Naive thymus-derived CD4-positive, alpha-beta T cell (primary cell): ENCODE measurements at regions of chr20 and their contacts with region 1.

Region 1: DNA sequence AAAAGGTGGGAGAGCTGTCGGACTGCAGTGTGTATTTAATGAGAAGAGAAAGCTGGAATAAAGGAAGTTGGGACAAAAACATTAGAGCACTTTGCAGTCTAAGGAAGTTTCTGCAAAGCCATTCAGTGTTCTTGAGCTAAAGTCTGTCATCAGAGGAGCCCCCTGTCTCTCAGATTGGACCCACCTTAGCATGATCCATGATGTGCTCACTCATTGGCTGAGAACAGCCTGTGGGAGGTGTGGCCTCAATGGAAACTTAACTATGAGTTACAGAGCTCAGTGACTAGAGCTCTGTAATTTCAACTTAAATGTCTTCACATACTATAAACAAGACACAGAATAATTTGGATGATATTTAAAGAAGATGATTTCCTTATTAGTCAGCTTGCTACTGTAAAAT is 437.0 kb downstream of the BTBD3 start:
- DNase-seq: no peak
- ATAC-seq: no peak
- H3K4me3 ChIP-seq: no peak overlapping the region
- H3K4me3 Mint-ChIP-seq: peak overlapping the region in 1 of 10 donors; percentile 8
- H3K27ac ChIP-seq: no peak overlapping the region
- H3K27ac Mint-ChIP-seq: no peak overlapping the region
- H3K4me1 ChIP-seq: no peaks in the 10 kb centered on the region
- H3K4me1 Mint-ChIP-seq: no peaks in the 10 kb centered on the region
- H3K27me3 ChIP-seq: no peaks in the 10 kb centered on the region
- H3K27me3 Mint-ChIP-seq: no peaks in the 10 kb centered on the region

Region 2: GRCh38 chr20:12028771-12029170 is 326.0 kb before region 1 on chr20:
- CTCF ChIA-PET with region 1: no interaction called
- POLR2A ChIA-PET with region 1: no interaction called
- intact Hi-C with region 1: loop called in 1 of 2 experiments (anchors 5 kb)
- DNase-seq: no peak
- ATAC-seq: no peak
- H3K4me3 ChIP-seq: no peak overlapping the region
- H3K4me3 Mint-ChIP-seq: no peak overlapping the region
- H3K27ac ChIP-seq: no peak overlapping the region
- H3K27ac Mint-ChIP-seq: no peak overlapping the region
- H3K4me1 ChIP-seq: no peaks in the 10 kb centered on the region
- H3K4me1 Mint-ChIP-seq: no peaks in the 10 kb centered on the region
- H3K27me3 ChIP-seq: no peaks in the 10 kb centered on the region
- H3K27me3 Mint-ChIP-seq: peaks cover 0 to 19% (median 5%) of the 10 kb centered on the region in 5 donors

Region 3: GRCh38 chr20:12256806-12257205 is 97.9 kb before region 1 on chr20:
- CTCF ChIA-PET with region 1: no interaction called
- POLR2A ChIA-PET with region 1: no interaction called
- intact Hi-C with region 1: no loop called
- DNase-seq: no peak
- ATAC-seq: no peak
- H3K4me3 ChIP-seq: no peak overlapping the region
- H3K4me3 Mint-ChIP-seq: no peak overlapping the region
- H3K27ac ChIP-seq: no peak overlapping the region
- H3K27ac Mint-ChIP-seq: no peak overlapping the region
- H3K4me1 ChIP-seq: no peaks in the 10 kb centered on the region
- H3K4me1 Mint-ChIP-seq: no peaks in the 10 kb centered on the region
- H3K27me3 ChIP-seq: no peaks in the 10 kb centered on the region
- H3K27me3 Mint-ChIP-seq: no peaks in the 10 kb centered on the region